Common myeloid progenitor, CD34-positive (primary cell): ENCODE measurements at regions of chr6 and their contacts with region 1.

Region 1: DNA sequence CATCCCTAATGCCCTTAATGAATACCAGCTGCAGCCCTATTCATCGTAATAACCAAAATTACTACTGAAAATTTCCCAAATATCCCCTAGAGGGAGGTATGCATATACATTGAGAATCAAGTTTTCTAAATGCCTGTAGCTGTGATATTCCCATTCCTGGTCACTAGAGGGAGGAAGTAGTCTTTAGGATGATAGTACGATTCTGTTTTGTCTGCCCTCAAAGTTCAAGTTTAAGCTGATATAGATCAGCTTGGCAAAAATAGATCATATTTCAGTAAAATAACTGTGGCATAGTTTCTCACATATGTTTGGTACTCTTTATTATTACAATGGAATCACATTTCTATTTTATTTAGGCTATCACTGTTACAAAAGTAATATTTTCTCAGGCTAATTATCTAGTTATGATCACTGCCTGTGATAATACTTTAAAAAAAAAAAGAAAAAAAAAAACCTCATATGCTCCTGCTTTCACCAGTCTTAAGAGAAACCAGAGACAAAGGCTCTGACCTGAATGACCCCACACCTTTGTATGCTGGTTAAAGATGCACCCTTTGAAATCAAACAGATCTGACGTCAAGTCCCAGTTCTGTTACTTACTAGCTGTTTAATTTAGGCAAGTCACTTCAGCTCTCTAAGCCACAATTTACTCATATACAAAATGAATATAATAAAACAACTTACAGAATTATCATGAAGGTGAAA is 11.0 kb downstream of the TSPYL1 start:
- DNase-seq: peak; percentile 80 to 83 (median 83)
- H3K4me3 ChIP-seq: no peak overlapping the region
- H3K27ac ChIP-seq: no peak overlapping the region
- H3K4me1 ChIP-seq: peaks cover 0 to 4% (median 2%) of the 10 kb centered on the region in 4 experiments
- H3K27me3 ChIP-seq: no peaks in the 10 kb centered on the region

Region 2: GRCh38 chr6:116206231-116206903 is 62.4 kb before region 1 on chr6:
- CTCF ChIA-PET with region 1: no interaction called
- POLR2A ChIA-PET with region 1: no interaction called
- DNase-seq: peak in 2 of 3 donors; percentile 20 to 39
- H3K4me3 ChIP-seq: no peak overlapping the region
- H3K27ac ChIP-seq: no peak overlapping the region
- H3K4me1 ChIP-seq: peaks cover 0 to 7% (median under 1%) of the 10 kb centered on the region in 4 experiments
- H3K27me3 ChIP-seq: no peaks in the 10 kb centered on the region

Region 3: GRCh38 chr6:116253505-116254296 is 15.0 kb before region 1 on chr6 and contains the start of gene TSPYL4:
- CTCF ChIA-PET with region 1: interaction called, 23 read pairs
- POLR2A ChIA-PET with region 1: no interaction called
- DNase-seq: peak; percentile 96 to 99 (median 98)
- H3K4me3 ChIP-seq: peak within 1 kb of the TSS; percentile 71 to 99 (median 94)
- H3K27ac ChIP-seq: peak within 1 kb of the TSS; percentile 99
- H3K4me1 ChIP-seq: peaks cover 20 to 43% (median 31%) of the 10 kb centered on the region in 4 experiments
- H3K27me3 ChIP-seq: no peaks in the 10 kb centered on the region

Region 4: DNA sequence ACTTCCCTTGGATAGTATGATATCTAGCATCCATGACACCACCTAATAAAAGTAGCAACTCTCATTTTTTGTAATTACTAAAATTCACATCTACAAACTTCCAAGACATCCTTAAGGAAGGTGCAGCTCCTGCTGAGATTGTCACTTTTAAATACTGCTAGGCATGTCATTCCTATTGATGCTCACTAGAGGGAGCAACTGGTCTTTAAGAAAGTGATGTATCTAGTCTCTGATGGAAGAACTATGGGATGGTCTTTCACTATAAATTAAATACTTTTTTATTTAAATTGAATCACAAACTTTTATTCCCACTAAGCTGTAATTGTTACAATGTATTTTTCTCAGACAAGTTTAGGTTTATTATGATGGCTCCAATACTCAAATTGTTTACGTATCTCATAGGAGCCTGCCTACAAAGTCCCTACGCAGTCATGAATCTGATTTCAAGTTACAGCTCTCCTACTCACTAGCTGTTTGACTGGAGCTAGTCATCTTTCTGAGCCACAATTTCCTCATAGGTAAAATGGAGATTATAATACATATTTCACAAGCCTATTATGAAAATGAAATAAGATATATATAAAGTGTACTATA is 19.0 kb after region 1 on chr6:
- CTCF ChIA-PET with region 1: interaction called, 46 read pairs
- POLR2A ChIA-PET with region 1: interaction called, 3 read pairs
- DNase-seq: peak; percentile 52 to 65 (median 59)
- H3K4me3 ChIP-seq: no peak overlapping the region
- H3K27ac ChIP-seq: no peak overlapping the region
- H3K4me1 ChIP-seq: peaks cover 0 to 5% (median 0%) of the 10 kb centered on the region in 4 experiments
- H3K27me3 ChIP-seq: no peaks in the 10 kb centered on the region

Region 5: DNA sequence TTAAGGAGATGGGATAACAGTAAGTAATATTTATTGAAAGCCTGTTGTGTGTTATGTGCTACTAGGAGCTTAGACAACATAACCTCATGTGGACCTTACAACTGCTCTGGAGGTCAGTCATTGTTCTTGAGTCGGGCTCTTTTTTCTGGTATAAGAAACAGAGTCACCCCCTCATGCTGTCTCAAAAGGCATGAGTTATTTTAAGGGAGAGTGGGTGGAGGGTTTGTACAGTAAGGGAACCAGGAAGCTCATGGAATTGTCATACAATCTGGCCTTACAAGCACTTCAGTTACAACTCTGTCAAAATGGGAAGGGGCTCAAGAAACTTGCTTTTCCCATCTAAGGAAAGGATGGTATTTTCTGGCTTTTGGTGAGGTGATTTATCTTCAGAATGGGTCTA is 85.5 kb after region 1 on chr6:
- CTCF ChIA-PET with region 1: no interaction called
- POLR2A ChIA-PET with region 1: no interaction called
- DNase-seq: no peak
- H3K4me3 ChIP-seq: no peak overlapping the region
- H3K27ac ChIP-seq: no peak overlapping the region
- H3K4me1 ChIP-seq: peaks cover 0 to 8% (median 0%) of the 10 kb centered on the region in 4 experiments
- H3K27me3 ChIP-seq: no peaks in the 10 kb centered on the region

Region 6: DNA sequence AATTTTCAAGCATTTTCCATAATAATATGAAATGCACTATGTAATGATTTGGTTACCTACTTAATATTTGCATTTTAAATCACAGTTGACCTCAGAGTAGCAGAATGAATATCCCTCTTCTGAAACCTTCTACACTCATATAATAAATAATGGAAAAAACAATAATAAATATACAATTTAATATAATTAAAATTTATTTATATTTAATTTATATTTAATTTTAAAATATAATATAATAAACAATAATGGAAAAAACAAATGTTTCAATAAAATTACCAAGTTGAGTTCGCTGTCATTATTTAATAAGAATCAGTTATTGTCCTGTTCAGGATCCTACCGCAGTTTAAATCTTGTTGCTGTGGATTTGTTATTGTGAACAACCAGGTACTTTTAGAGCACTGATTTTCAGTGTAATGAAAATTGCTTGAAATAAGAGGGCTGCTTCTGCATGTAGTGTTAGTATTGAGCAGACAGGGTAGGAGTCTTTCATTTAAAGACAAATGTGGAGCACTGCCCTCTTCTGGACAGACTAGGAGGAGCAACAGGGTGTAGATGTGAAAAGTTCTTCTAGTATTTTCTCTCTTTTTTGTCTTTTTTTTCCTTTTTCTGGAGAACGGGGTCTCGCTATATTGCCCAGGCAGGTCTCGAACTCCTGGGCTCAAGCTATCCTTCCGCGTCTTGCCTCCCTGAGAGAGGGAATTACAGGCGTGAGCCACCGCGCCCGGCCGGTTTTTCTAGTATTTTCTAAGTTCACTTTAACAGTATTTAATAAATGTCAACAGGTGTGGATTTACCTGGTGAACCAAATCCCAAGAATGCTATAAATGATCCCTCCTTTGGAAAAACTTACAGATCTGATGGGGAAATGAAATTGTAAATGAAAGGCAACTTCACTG is 263.2 kb after region 1 on chr6:
- CTCF ChIA-PET with region 1: interaction called, 58 read pairs
- POLR2A ChIA-PET with region 1: no interaction called
- DNase-seq: peak; percentile 81 to 93 (median 91)
- H3K4me3 ChIP-seq: no peak overlapping the region
- H3K27ac ChIP-seq: no peak overlapping the region
- H3K4me1 ChIP-seq: peaks cover 0 to 9% (median 2%) of the 10 kb centered on the region in 4 experiments
- H3K27me3 ChIP-seq: no peaks in the 10 kb centered on the region

Region 7: GRCh38 chr6:116570856-116571682 is 302.3 kb after region 1 on chr6 and contains the start of gene RWDD1:
- CTCF ChIA-PET with region 1: interaction called, 40 read pairs
- POLR2A ChIA-PET with region 1: no interaction called
- DNase-seq: peak; percentile 100
- H3K4me3 ChIP-seq: peak within 1 kb of the TSS; percentile 93 to 100 (median 97)
- H3K27ac ChIP-seq: peak within 1 kb of the TSS; percentile 92 to 97
- H3K4me1 ChIP-seq: peaks cover 24 to 37% (median 32%) of the 10 kb centered on the region in 4 experiments
- H3K27me3 ChIP-seq: no peaks in the 10 kb centered on the region